ENCODE measurements at regions of chr18 and their contacts with region 1.

Region 1: DNA sequence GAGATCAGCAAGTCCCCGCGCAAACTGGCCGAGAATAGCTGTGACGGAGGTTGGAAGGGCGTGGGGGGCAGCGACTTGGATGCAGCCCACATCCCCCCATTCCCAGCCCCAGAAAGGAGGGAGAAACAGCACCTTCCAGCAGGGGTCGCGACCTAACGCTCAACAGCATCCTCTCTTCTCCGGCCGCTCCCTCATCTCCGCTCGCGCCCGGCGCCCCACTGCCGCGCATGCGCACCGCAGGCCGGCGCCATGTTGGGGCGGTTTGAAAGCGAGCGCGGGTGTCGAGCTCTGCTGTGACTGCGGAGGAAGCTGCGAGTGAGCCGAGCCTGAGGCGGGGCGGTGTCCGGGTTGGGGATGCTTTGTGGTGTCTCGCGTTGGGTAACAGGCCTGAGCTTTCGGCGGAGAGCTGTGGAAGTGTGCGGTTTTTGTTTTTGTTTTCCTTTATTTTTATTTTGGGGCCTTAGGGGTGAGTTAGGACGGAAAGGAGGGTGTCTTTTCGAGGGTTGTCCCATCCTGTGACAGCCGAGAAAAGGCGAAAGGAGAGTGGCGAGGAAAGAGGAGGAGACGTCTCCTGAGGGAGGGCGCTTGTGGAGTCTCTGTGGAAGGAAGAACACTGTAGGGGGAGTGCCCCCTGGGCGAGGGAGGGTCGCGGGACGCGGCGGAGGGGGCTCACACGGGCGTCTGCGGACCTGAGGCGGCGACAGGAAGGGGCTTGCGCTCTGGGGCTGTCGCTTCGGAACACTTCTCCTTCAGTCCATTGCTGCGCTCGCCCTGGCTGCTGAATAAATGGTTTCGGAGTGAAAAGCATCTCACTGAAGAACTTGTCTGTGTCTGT is at the starts of genes C18orf54 and STARD6:
- DNase-seq: peak; percentile 88
- H3K4me3 ChIP-seq: peak within 1 kb of the TSS; percentile 86 to 94 (median 89)
- H3K27ac ChIP-seq: peak within 1 kb of the TSS; percentile 70
- H3K4me1 ChIP-seq: peaks cover 8% of the 10 kb centered on the region
- H3K27me3 ChIP-seq: no peaks in the 10 kb centered on the region
- CTCF ChIP-seq: peak; percentile 16 to 53
- total RNA-seq, gene C18orf54: 2.3 to 12.0 TPM
- total RNA-seq, gene STARD6: 0.49 TPM in 1 of 2 donors, not detected in the other

Region 2: DNA sequence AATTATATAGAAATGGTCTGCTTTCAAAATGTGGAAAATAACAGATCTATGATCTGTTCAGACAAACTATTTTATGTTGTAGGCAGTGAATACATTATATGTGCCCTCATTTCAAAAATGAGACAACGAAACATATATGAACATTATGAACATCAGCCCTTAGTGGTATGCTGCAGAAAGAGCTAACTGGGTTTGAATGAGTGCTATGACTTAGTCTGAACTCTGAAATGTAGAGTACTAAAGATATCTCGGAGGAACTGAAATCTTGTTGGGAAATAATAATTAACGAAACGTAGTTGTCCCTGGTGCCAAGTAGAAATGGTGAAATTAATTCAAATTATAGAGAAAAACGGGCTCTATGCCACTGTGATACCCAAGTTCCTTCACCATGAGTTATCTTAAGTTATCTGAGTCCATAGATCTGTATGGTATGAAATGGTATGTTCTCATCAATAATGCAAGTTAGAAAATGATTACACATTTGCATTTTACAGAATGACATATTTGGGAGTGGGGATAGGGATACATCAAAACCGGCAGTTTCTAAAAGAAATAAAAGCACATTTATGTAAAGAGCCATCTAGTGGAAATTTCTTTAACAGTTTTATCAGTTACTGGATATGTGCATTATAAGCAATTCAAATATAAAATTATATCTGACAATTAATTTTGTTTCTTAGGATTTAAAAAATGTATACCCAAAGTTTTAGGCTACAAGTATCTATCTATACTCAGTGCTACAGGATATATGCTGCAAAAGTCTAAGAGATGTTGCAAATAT is 26.9 kb before region 1 on chr18:
- CTCF ChIA-PET with region 1: no interaction called
- dilution Hi-C with region 1: no loop called
- in situ Hi-C with region 1: no loop called
- intact Hi-C with region 1: loop called (anchors 2 kb)
- DNase-seq: no peak
- H3K4me3 ChIP-seq: no peak overlapping the region
- H3K27ac ChIP-seq: no peak overlapping the region
- H3K4me1 ChIP-seq: no peaks in the 10 kb centered on the region
- H3K27me3 ChIP-seq: no peaks in the 10 kb centered on the region
- CTCF ChIP-seq: peak; percentile 4 to 11

Measured in mammary epithelial cell (primary cell).